ENCODE measurements at regions of chr19 and their contacts with region 1.

Region 1: GRCh38 chr19:58305065-58305931 is at the start of gene ERVK3-1:
- DNase-seq: peak; percentile 96
- H3K4me3 Mint-ChIP-seq: peak within 1 kb of the TSS; percentile 100
- H3K27ac Mint-ChIP-seq: peak within 1 kb of the TSS; percentile 100
- H3K4me1 Mint-ChIP-seq: peaks cover 49% of the 10 kb centered on the region
- H3K27me3 Mint-ChIP-seq: no peaks in the 10 kb centered on the region
- total RNA-seq, gene ERVK3-1: 53.8 to 60.1 TPM

Region 2: GRCh38 chr19:58228585-58229254 is 76.6 kb before region 1 on chr19 and contains the start of gene ZNF544:
- CTCF ChIA-PET with region 1: interaction called, 4 read pairs
- POLR2A ChIA-PET with region 1: interaction called, 10 read pairs
- DNase-seq: peak; percentile 69
- H3K4me3 Mint-ChIP-seq: peak within 1 kb of the TSS; percentile 83
- H3K27ac Mint-ChIP-seq: peak within 1 kb of the TSS; percentile 80
- H3K4me1 Mint-ChIP-seq: peaks cover 34% of the 10 kb centered on the region
- H3K27me3 Mint-ChIP-seq: no peaks in the 10 kb centered on the region
- total RNA-seq, gene ZNF544: 47.5 to 50.0 TPM

Region 3: GRCh38 chr19:58326914-58327726 is 21.8 kb after region 1 on chr19 and contains the start of gene ZSCAN22:
- CTCF ChIA-PET with region 1: no interaction called
- POLR2A ChIA-PET with region 1: interaction called, 23 read pairs
- DNase-seq: peak; percentile 93
- H3K4me3 Mint-ChIP-seq: no peak within 1 kb of the TSS
- H3K27ac Mint-ChIP-seq: no peak within 1 kb of the TSS
- H3K4me1 Mint-ChIP-seq: no peaks in the 10 kb centered on the region
- H3K27me3 Mint-ChIP-seq: no peaks in the 10 kb centered on the region
- total RNA-seq, gene ZSCAN22: 5.4 to 5.7 TPM